ENCODE measurements at regions of chr17 and their contacts with region 1.

Region 1: GRCh38 chr17:51563961-51564360 is 303.6 kb downstream of the UTP18 start:
- DNase-seq: no peak
- ATAC-seq: no peak
- H3K4me3 Mint-ChIP-seq: no peak overlapping the region
- H3K27ac Mint-ChIP-seq: no peak overlapping the region
- H3K4me1 Mint-ChIP-seq: no peaks in the 10 kb centered on the region
- H3K27me3 Mint-ChIP-seq: peaks cover 16% of the 10 kb centered on the region

Region 2: GRCh38 chr17:51508048-51508447 is 55.9 kb before region 1 on chr17:
- CTCF ChIA-PET with region 1: no interaction called
- POLR2A ChIA-PET with region 1: no interaction called
- intact Hi-C with region 1: loop called in 1 of 2 experiments (anchors 10 kb)
- DNase-seq: no peak
- ATAC-seq: no peak
- H3K4me3 Mint-ChIP-seq: no peak overlapping the region
- H3K27ac Mint-ChIP-seq: no peak overlapping the region
- H3K4me1 Mint-ChIP-seq: peaks cover 4% of the 10 kb centered on the region
- H3K27me3 Mint-ChIP-seq: peaks cover 3% of the 10 kb centered on the region

Region 3: DNA sequence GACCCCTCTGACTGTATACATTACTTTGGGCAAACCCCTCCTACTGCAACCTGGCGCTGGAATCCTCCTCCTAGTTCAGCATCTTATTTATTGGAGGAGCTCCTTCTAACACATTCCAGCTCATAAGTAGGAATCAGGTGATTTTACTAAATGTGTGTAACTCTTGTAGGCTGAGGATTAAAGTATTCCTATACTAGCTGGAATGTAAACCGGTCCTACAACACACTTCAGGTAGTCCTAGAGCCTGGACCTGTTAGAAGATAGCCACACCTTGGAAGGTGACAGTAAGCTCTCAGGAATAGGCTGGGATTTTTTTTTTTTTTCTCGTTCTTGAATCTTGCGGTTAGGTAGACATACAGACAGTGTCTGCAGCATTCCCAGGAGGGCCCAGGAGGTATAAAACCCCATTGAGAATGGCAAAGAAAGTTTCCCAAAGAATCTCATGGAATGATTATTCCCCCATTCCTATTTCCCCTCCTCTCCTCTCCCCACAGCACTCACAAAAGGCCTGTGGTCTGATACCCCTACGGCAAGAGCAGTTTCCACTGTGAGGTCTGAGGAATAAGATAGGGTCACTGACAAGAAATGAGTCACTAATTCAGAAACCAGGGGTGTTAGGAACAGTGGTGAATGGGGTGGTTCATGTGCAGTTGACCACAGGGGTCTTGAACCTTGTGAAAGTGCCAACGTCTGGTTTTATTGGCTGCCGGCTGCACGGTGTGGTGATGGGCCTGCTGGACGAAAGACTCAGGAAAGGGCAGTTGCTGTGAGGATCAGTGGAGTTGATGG is 36.6 kb before region 1 on chr17:
- CTCF ChIA-PET with region 1: no interaction called
- POLR2A ChIA-PET with region 1: no interaction called
- intact Hi-C with region 1: no loop called
- DNase-seq: no peak
- ATAC-seq: no peak
- H3K4me3 Mint-ChIP-seq: no peak overlapping the region
- H3K27ac Mint-ChIP-seq: no peak overlapping the region
- H3K4me1 Mint-ChIP-seq: no peaks in the 10 kb centered on the region
- H3K27me3 Mint-ChIP-seq: peaks cover 13% of the 10 kb centered on the region

Measured in activated CD4-positive, alpha-beta T cell treated with anti-CD3 and anti-CD28 coated beads for 36 hours (primary cell).